Left cardiac atrium (tissue), 4 donors: ENCODE measurements at regions of chr1 and their contacts with region 1.

Region 1: GRCh38 chr1:61391730-61392129 is 309.4 kb downstream of the NFIA start:
- DNase-seq: no peak
- ATAC-seq: no peak

Region 2: DNA sequence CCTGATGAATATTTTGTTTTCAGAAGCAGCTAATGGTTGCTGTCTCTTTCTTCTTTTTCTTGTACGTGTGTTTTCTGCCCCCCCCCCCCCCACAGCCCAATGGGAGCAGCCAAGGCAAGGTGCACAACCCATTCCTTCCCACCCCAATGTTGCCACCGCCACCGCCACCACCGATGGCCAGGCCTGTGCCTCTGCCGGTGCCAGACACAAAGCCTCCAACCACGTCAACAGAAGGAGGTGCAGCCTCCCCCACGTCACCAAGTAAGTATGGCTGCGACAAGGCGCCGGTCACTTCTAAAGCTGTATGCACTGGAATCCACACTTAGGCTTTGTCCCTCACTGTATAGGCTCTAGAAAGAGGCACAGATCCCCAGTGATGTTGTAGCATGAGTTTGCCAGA is 14.7 kb after region 1 on chr1:
- intact Hi-C with region 1: loop called in 1 of 2 experiments (anchors 2 kb)
- DNase-seq: no peak
- ATAC-seq: no peak